Activated CD8-positive, alpha-beta memory T cell treated with anti-CD3 and anti-CD28 coated beads, Interleukin-2, amount 10 ng/mL, durations not matched to agents 7 days and 5 days (primary cell): ENCODE measurements at regions of chr17 and their contacts with region 1.

Region 1: GRCh38 chr17:7716901-7717755 is at the start of gene DNAH2:
- DNase-seq: peak; percentile 83
- ATAC-seq: peak; percentile 84
- H3K4me3 Mint-ChIP-seq: peak within 1 kb of the TSS; percentile 77
- H3K27ac Mint-ChIP-seq: peak within 1 kb of the TSS; percentile 38
- H3K4me1 Mint-ChIP-seq: peaks cover 34% of the 10 kb centered on the region
- H3K27me3 Mint-ChIP-seq: peaks cover 73% of the 10 kb centered on the region
- total RNA-seq, gene DNAH2: not detected

Region 2: DNA sequence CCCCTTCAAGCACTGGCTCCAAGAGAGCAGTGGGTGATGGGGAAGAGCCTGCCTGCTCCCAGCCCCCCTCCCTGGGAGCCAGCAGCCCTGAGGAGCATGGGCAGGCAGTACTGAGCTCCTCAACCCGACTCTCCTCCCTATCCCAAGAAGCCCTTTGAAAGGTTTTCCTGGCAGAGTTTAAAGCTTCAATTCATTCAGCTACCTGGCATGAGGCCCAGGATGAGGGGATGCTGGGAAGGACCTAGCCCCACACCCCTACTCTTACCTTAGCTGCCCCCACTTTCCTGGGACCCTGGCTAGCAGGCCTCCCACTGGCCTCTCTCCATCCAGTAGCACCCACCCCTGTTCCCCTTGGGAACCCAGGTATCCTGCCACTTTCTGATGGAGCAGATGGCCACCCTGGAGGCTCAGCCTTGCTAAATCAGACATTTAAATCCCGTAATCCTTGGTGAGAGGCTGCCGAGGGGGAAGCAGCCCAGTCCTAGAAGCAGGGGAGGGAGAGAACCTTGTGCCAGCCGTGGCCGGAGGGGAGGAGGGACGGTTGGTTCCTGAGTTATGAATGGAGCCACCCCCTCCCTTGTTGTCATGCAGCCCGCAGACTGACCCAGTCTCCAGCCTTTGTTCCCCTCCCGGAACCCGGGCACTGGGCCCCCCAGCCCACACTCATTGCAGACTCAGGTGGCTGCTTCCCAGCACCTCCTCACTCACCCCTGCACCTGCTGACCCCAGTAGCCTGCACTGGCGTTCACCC is 49.3 kb before region 1 on chr17:
- CTCF ChIA-PET with region 1: no interaction called
- DNase-seq: no peak
- ATAC-seq: no peak
- H3K4me3 Mint-ChIP-seq: no peak overlapping the region
- H3K27ac Mint-ChIP-seq: no peak overlapping the region
- H3K4me1 Mint-ChIP-seq: no peaks in the 10 kb centered on the region
- H3K27me3 Mint-ChIP-seq: no peaks in the 10 kb centered on the region

Region 3: GRCh38 chr17:7703584-7704479 is 13.3 kb before region 1 on chr17:
- CTCF ChIA-PET with region 1: interaction called, 11 read pairs
- DNase-seq: no peak
- ATAC-seq: no peak
- H3K4me3 Mint-ChIP-seq: no peak overlapping the region
- H3K27ac Mint-ChIP-seq: no peak overlapping the region
- H3K4me1 Mint-ChIP-seq: peaks cover 10% of the 10 kb centered on the region
- H3K27me3 Mint-ChIP-seq: peaks cover 42% of the 10 kb centered on the region